CD8-positive, alpha-beta T cell (primary cell): ENCODE measurements at regions of chr19 and their contacts with region 1.

Region 1: GRCh38 chr19:10251792-10252694 is at the start of gene MRPL4:
- DNase-seq: peak; percentile 90 to 99 (median 94)
- ATAC-seq: peak; percentile 97
- H3K4me3 ChIP-seq: peak within 1 kb of the TSS; percentile 92 to 99
- H3K4me3 Mint-ChIP-seq: peak within 1 kb of the TSS; percentile 99
- H3K27ac ChIP-seq: peak within 1 kb of the TSS; percentile 68 to 80
- H3K27ac Mint-ChIP-seq: peak within 1 kb of the TSS; percentile 97
- H3K4me1 ChIP-seq: peaks cover 7% of the 10 kb centered on the region
- H3K4me1 Mint-ChIP-seq: peaks cover 24% of the 10 kb centered on the region
- H3K27me3 ChIP-seq: no peaks in the 10 kb centered on the region
- H3K27me3 Mint-ChIP-seq: no peaks in the 10 kb centered on the region
- CTCF ChIP-seq: no peak
- total RNA-seq, gene MRPL4: 39.5 to 46.0 TPM

Region 2: DNA sequence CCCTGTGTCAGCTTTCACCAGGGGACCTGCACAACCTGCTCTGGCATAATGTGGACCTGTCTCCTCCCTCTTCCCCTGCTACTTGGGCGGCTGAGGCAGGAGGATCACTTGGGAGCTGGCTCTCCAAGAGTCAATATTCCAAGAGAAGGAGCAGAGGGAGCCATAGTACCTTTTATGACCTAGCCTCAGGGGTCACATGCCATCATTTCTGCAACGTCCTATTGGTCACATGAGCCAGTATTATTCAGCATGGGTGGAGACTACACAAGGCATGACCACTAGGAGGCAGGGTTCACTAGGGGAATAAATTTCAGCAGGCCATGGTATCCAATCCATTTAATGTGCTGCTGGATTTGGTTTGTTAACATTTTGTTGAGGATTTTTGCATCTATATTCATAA is 177.9 kb before region 1 on chr19:
- CTCF ChIA-PET with region 1: interaction called, 4 read pairs
- POLR2A ChIA-PET with region 1: no interaction called
- intact Hi-C with region 1: loop called (anchors 1 to 2 kb)
- DNase-seq: peak in 6 of 9 experiments; percentile 34 to 83 (median 51)
- ATAC-seq: peak; percentile 84
- H3K4me3 ChIP-seq: no peak overlapping the region
- H3K4me3 Mint-ChIP-seq: no peak overlapping the region
- H3K27ac ChIP-seq: no peak overlapping the region
- H3K27ac Mint-ChIP-seq: peak overlapping the region; percentile 23
- H3K4me1 ChIP-seq: no peaks in the 10 kb centered on the region
- H3K4me1 Mint-ChIP-seq: no peaks in the 10 kb centered on the region
- H3K27me3 ChIP-seq: no peaks in the 10 kb centered on the region
- H3K27me3 Mint-ChIP-seq: no peaks in the 10 kb centered on the region
- CTCF ChIP-seq: peak; percentile 52

Region 3: DNA sequence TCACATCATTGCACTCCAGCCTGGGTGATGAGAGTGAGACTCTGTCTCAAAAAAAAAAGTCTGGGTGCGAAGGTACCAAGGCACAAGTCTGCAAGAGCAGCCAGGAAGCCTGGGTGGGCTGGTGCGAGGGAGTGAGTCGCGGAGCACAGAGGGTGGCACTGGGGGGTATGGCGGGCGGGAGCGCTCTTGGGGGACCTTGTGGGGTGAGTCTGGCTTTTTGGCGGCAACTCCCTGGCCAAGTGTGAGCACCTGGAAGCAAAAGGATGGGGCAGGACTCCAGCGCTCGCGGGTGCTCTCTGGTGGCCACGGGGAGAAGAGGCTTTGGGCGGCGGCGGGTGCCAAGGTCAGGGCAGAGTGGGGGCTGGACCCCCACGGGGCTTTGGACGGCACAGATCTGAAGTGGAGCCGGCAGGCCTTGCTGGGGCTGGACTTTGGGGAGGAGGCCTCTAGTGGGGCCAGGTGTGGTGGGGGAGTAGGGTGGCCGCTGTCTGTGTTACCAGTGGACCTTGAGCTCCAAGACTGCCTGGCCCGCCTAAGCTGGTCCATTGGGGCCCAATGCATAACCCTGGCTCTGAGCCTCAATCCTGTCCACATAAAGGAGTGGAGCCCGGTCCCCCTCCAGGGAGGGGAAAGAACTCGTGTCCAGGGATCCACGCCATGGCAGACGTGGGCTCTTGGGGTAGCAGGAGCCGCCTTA is 139.0 kb before region 1 on chr19:
- CTCF ChIA-PET with region 1: interaction called, 7 read pairs
- POLR2A ChIA-PET with region 1: no interaction called
- intact Hi-C with region 1: loop called in 1 of 2 experiments (anchors 2 kb)
- DNase-seq: peak in 8 of 9 experiments; percentile 46 to 90 (median 76)
- ATAC-seq: peak; percentile 59
- H3K4me3 ChIP-seq: peak overlapping the region in 1 of 2 experiments; percentile 54
- H3K4me3 Mint-ChIP-seq: peak overlapping the region; percentile 67
- H3K27ac ChIP-seq: peak overlapping the region; percentile 44 to 90
- H3K27ac Mint-ChIP-seq: peak overlapping the region; percentile 89
- H3K4me1 ChIP-seq: peaks cover 39% of the 10 kb centered on the region
- H3K4me1 Mint-ChIP-seq: peaks cover 44% of the 10 kb centered on the region
- H3K27me3 ChIP-seq: no peaks in the 10 kb centered on the region
- H3K27me3 Mint-ChIP-seq: no peaks in the 10 kb centered on the region
- CTCF ChIP-seq: peak; percentile 63

Region 4: GRCh38 chr19:10152100-10152499 is 99.9 kb before region 1 on chr19:
- CTCF ChIA-PET with region 1: no interaction called
- POLR2A ChIA-PET with region 1: no interaction called
- intact Hi-C with region 1: no loop called
- DNase-seq: no peak
- ATAC-seq: no peak
- H3K4me3 ChIP-seq: no peak overlapping the region
- H3K4me3 Mint-ChIP-seq: no peak overlapping the region
- H3K27ac ChIP-seq: no peak overlapping the region
- H3K27ac Mint-ChIP-seq: no peak overlapping the region
- H3K4me1 ChIP-seq: no peaks in the 10 kb centered on the region
- H3K4me1 Mint-ChIP-seq: no peaks in the 10 kb centered on the region
- H3K27me3 ChIP-seq: no peaks in the 10 kb centered on the region
- H3K27me3 Mint-ChIP-seq: no peaks in the 10 kb centered on the region
- CTCF ChIP-seq: no peak

Region 5: DNA sequence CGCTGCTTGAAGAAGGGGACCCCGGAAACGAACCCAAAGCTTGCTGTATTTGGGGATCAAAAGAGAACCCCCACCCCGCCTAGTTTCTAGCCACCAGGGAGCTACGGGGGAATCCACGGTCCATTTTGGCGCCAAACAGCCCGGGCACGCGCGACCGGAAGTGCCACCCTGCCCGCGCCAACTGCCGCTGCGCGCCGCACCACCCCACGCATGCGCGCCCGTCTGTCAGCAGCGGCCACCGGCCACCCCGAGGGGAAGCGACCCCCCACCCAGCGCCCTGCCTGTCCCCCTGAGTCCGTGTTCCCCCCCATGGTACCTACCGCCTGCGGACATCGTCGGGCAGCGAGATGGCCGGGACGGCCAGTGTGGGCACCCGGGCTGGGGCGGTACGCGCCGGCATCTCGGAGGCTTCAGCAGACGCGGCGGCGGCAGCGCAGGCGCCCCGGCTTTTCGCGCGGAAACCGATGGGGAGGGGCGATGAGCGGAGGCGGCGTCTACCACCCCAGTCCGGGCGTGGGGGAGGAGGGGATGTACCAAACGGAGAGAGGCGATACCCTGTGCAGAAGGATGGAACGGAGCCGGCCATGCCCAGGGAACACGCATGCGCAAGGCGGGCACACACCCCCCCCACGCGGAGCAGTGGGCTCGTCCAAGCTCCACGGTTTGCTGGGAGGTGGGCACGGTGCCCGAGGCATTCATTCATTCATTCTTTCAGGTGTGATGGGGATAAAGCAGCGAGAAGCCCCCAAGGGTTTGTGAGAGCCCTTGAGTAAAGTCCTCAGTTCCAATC is 57.3 kb before region 1 on chr19 and contains the start of gene DNMT1:
- CTCF ChIA-PET with region 1: interaction called, 4 read pairs
- POLR2A ChIA-PET with region 1: interaction called, 5 read pairs
- intact Hi-C with region 1: loop called (anchors 1 kb)
- DNase-seq: peak; percentile 92 to 97 (median 95)
- ATAC-seq: peak; percentile 96
- H3K4me3 ChIP-seq: peak within 1 kb of the TSS; percentile 97 to 99
- H3K4me3 Mint-ChIP-seq: peak within 1 kb of the TSS; percentile 96
- H3K27ac ChIP-seq: peak within 1 kb of the TSS; percentile 66 to 76
- H3K27ac Mint-ChIP-seq: peak within 1 kb of the TSS; percentile 91
- H3K4me1 ChIP-seq: peaks cover 16% of the 10 kb centered on the region
- H3K4me1 Mint-ChIP-seq: peaks cover 33% of the 10 kb centered on the region
- H3K27me3 ChIP-seq: no peaks in the 10 kb centered on the region
- H3K27me3 Mint-ChIP-seq: no peaks in the 10 kb centered on the region
- CTCF ChIP-seq: no peak
- total RNA-seq, gene DNMT1: 135 to 154 TPM

Region 6: GRCh38 chr19:10238172-10238783 is 13.8 kb before region 1 on chr19:
- CTCF ChIA-PET with region 1: interaction called, 34 read pairs
- POLR2A ChIA-PET with region 1: interaction called, 5 read pairs
- intact Hi-C with region 1: no loop called
- DNase-seq: no peak
- ATAC-seq: no peak
- H3K4me3 ChIP-seq: no peak overlapping the region
- H3K4me3 Mint-ChIP-seq: no peak overlapping the region
- H3K27ac ChIP-seq: no peak overlapping the region
- H3K27ac Mint-ChIP-seq: peak overlapping the region; percentile 60
- H3K4me1 ChIP-seq: peaks cover 18% of the 10 kb centered on the region
- H3K4me1 Mint-ChIP-seq: peaks cover 21% of the 10 kb centered on the region
- H3K27me3 ChIP-seq: no peaks in the 10 kb centered on the region
- H3K27me3 Mint-ChIP-seq: no peaks in the 10 kb centered on the region
- CTCF ChIP-seq: no peak

Region 7: DNA sequence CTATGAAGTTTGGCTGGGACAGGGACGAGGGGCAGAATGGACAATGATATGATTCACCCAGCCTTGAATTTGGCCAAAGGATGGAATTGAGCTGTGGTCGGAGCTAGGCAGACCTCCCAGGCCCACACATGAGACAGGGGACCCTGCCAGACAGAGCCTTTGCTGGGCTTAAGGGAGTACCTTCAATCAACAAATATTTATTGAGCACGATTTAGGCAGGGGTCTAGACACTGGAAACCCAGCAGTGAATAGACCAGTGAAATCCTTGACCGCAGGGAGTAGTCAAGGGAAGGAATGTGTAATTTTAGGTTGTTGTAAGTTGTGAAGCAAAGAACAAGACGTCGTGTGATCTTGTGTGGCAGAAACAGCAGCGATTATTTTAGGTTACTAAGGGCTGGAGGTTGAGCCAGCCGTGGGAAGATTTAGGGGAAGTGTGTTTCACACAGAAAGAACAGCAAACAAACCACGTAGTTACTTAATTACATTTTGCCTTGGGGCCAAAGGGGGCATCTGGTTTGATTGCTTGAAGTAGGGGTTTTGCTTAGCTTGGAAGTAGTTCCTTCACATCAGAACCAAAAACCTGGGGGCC is 351.9 kb after region 1 on chr19:
- CTCF ChIA-PET with region 1: no interaction called
- POLR2A ChIA-PET with region 1: no interaction called
- intact Hi-C with region 1: no loop called
- DNase-seq: peak; percentile 20 to 84 (median 54)
- ATAC-seq: peak; percentile 21
- H3K4me3 ChIP-seq: peak overlapping the region; percentile 91 to 99
- H3K4me3 Mint-ChIP-seq: peak overlapping the region; percentile 96
- H3K27ac ChIP-seq: peak overlapping the region; percentile 99 to 100
- H3K27ac Mint-ChIP-seq: peak overlapping the region; percentile 99
- H3K4me1 ChIP-seq: peaks cover 38% of the 10 kb centered on the region
- H3K4me1 Mint-ChIP-seq: peaks cover 29% of the 10 kb centered on the region
- H3K27me3 ChIP-seq: no peaks in the 10 kb centered on the region
- H3K27me3 Mint-ChIP-seq: no peaks in the 10 kb centered on the region
- CTCF ChIP-seq: no peak